Heart left ventricle (tissue), 16 donors: ENCODE measurements at regions of chr7 and their contacts with region 1.

Region 1: DNA sequence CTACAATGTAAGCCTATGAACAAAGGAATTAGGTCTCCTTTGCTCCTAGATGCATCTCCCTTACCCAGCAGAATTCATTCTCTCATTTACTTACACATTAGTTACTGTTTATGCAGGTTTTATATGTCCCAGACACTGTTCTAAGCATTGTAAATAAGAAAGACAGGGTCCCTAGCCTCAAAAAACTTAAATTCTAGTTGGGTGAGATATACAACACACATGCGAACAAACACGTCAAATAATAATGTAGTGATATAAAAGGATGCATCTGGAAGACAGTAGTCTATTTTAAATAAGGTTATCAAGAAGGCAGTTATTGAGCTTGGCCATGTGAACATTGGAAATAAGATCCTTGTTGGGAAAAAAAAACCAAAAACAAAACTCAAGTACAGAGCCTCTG is 479.7 kb downstream of the DNAJB9 start:
- DNase-seq: no peak
- ATAC-seq: no peak
- H3K4me3 ChIP-seq: no peak overlapping the region
- H3K27ac ChIP-seq: no peak overlapping the region
- H3K4me1 ChIP-seq: no peaks in the 10 kb centered on the region
- H3K27me3 ChIP-seq: no peaks in the 10 kb centered on the region
- CTCF ChIP-seq: no peak
- POLR2A ChIP-seq: no peak

Region 2: GRCh38 chr7:109101332-109101731 is 52.0 kb after region 1 on chr7:
- intact Hi-C with region 1: loop called in 1 of 10 experiments (anchors 10 kb)
- DNase-seq: no peak
- ATAC-seq: no peak
- H3K4me3 ChIP-seq: no peak overlapping the region
- H3K27ac ChIP-seq: no peak overlapping the region
- H3K4me1 ChIP-seq: no peaks in the 10 kb centered on the region
- H3K27me3 ChIP-seq: no peaks in the 10 kb centered on the region
- CTCF ChIP-seq: no peak
- POLR2A ChIP-seq: no peak